MCF 10A (cell line): ENCODE measurements at regions of chr17 and their contacts with region 1.

Region 1: GRCh38 chr17:42667123-42667951 is 8.3 kb downstream of the TUBG2 start:
- DNase-seq: peak; percentile 98
- H3K4me3 Mint-ChIP-seq: peak overlapping the region; percentile 18
- H3K27ac Mint-ChIP-seq: peak overlapping the region; percentile 61
- H3K4me1 Mint-ChIP-seq: peaks cover 29% of the 10 kb centered on the region
- H3K27me3 Mint-ChIP-seq: no peaks in the 10 kb centered on the region
- CTCF ChIP-seq: no peak

Region 2: DNA sequence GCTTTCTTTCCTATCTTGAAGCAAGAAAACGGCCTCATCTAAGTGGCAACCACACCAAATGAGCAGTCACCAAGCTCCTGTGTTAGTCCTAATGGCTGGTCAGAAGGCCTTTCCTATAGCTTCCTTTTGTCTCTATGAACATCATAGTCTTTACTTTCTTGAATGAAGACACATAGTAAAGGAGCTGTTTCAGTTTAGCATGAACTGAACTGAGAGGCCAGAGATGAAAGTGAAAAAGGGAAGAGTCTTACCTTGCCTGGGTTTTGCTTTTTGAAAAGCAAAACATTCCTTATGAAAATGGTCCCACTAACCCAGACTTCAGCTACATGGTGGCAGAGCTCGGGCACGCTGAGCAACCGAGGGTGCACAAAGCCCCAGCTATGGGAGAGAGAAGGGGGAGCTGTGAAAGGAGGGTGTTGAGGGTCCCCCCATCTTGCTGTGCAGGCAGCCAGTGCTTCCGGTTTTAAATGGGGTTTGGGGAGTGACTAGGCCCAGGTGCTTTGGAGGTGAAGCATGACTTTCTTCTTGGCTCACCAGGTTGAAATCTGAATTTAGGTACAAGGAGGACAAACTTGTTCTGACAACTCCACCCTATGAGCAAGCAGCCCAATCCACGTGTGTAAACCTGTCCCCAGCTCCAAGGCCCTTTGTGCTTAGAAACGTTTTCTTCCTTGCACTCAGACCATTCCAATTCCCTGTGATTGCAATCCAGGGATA is 80.7 kb before region 1 on chr17:
- CTCF ChIA-PET with region 1: no interaction called
- POLR2A ChIA-PET with region 1: interaction called, 16 read pairs
- intact Hi-C with region 1: no loop called
- DNase-seq: peak; percentile 52
- H3K4me3 Mint-ChIP-seq: peak overlapping the region; percentile 21
- H3K27ac Mint-ChIP-seq: peak overlapping the region; percentile 25
- H3K4me1 Mint-ChIP-seq: peaks cover 21% of the 10 kb centered on the region
- H3K27me3 Mint-ChIP-seq: no peaks in the 10 kb centered on the region
- CTCF ChIP-seq: no peak

Region 3: DNA sequence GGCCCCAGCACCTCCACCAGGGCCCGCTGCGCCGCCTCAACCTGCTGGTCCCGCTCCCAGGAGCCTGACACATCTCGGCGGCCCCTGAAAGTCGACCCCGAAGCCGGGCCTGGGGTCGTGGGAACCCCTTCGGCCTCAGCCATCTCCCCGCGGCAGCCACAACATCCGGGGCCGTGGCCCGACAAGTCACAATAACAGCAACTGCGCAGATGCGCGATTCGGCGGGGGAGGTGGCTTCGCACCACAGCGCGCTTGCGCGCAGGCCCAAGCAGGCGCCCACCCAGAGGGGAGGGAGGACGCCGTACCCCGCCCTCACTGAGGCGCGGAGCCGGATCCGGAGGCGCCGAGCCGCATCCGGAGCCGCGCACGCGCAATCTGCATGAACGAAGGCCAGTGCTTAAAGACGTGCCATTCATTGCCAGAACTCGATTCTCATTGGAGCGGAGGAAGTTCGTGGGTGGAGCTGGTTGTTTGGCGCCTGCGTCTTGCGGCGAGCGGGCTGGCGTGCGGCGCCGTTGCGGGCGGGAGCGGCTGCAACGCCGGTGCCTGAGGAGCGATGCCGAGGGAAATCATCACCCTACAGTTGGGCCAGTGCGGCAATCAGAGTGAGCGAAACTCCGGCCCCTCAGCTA is 58.0 kb before region 1 on chr17 and contains the starts of genes RETREG3 and TUBG1:
- CTCF ChIA-PET with region 1: interaction called, 3 read pairs
- POLR2A ChIA-PET with region 1: interaction called, 158 read pairs
- intact Hi-C with region 1: no loop called
- DNase-seq: peak; percentile 99
- H3K4me3 Mint-ChIP-seq: peak within 1 kb of the TSS; percentile 99
- H3K27ac Mint-ChIP-seq: peak within 1 kb of the TSS; percentile 91
- H3K4me1 Mint-ChIP-seq: peaks cover 13% of the 10 kb centered on the region
- H3K27me3 Mint-ChIP-seq: no peaks in the 10 kb centered on the region
- CTCF ChIP-seq: peak; percentile 34
- total RNA-seq, gene RETREG3: 45.2 and 46.0 TPM in 2 replicates
- total RNA-seq, gene TUBG1: 57.8 and 60.2 TPM in 2 replicates

Region 4: GRCh38 chr17:42623732-42624596 is 43.4 kb before region 1 on chr17:
- CTCF ChIA-PET with region 1: interaction called, 9 read pairs
- POLR2A ChIA-PET with region 1: interaction called, 19 read pairs
- intact Hi-C with region 1: no loop called
- DNase-seq: peak; percentile 75
- H3K4me3 Mint-ChIP-seq: no peak overlapping the region
- H3K27ac Mint-ChIP-seq: no peak overlapping the region
- H3K4me1 Mint-ChIP-seq: peaks cover 14% of the 10 kb centered on the region
- H3K27me3 Mint-ChIP-seq: no peaks in the 10 kb centered on the region
- CTCF ChIP-seq: no peak

Region 5: GRCh38 chr17:42629411-42630009 is 37.8 kb before region 1 on chr17:
- CTCF ChIA-PET with region 1: interaction called, 6 read pairs
- POLR2A ChIA-PET with region 1: interaction called, 19 read pairs
- intact Hi-C with region 1: no loop called
- DNase-seq: peak; percentile 87
- H3K4me3 Mint-ChIP-seq: no peak overlapping the region
- H3K27ac Mint-ChIP-seq: peak overlapping the region; percentile 74
- H3K4me1 Mint-ChIP-seq: peaks cover 10% of the 10 kb centered on the region
- H3K27me3 Mint-ChIP-seq: no peaks in the 10 kb centered on the region
- CTCF ChIP-seq: no peak

Region 6: GRCh38 chr17:42704837-42705494 is 37.6 kb after region 1 on chr17:
- CTCF ChIA-PET with region 1: no interaction called
- POLR2A ChIA-PET with region 1: no interaction called
- intact Hi-C with region 1: no loop called
- DNase-seq: no peak
- H3K4me3 Mint-ChIP-seq: no peak overlapping the region
- H3K27ac Mint-ChIP-seq: no peak overlapping the region
- H3K4me1 Mint-ChIP-seq: no peaks in the 10 kb centered on the region
- H3K27me3 Mint-ChIP-seq: no peaks in the 10 kb centered on the region
- CTCF ChIP-seq: no peak

Region 7: GRCh38 chr17:42809250-42809649 is 141.9 kb after region 1 on chr17:
- CTCF ChIA-PET with region 1: no interaction called
- POLR2A ChIA-PET with region 1: no interaction called
- intact Hi-C with region 1: no loop called
- DNase-seq: peak; percentile 82
- H3K4me3 Mint-ChIP-seq: no peak overlapping the region
- H3K27ac Mint-ChIP-seq: no peak overlapping the region
- H3K4me1 Mint-ChIP-seq: peaks cover 6% of the 10 kb centered on the region
- H3K27me3 Mint-ChIP-seq: no peaks in the 10 kb centered on the region
- CTCF ChIP-seq: no peak